WTC11 (cell line): ENCODE measurements at regions of chr2 and their contacts with region 1.

Region 1: DNA sequence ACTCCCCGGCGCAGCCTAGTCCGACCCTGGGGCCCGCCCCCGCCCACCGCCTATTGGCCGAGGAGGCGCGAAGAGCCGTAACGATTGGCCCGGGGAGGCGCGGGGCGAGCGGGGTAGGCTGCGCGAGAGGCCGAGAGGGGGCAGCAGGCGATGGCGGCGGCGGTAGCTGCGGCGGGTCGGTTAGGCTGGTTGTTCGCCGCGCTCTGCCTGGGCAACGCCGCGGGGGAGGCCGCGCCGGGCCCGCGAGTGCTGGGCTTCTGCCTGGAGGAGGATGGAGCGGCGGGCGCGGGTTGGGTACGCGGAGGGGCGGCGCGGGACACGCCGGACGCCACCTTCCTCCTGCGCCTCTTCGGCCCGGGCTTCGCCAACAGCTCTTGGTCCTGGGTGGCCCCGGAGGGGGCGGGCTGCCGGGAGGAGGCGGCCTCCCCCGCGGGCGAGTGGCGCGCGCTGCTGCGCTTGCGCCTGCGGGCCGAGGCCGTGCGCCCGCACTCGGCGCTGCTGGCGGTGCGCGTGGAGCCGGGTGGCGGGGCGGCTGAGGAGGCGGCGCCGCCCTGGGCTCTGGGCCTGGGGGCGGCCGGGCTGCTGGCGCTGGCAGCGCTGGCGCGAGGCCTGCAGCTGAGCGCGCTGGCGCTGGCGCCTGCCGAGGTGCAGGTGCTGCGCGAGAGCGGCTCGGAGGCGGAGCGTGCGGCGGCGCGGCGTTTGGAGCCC is at the start of gene CNNM3:
- DNase-seq: peak; percentile 99
- ATAC-seq: peak; percentile 94
- H3K4me3 Mint-ChIP-seq: peak within 1 kb of the TSS; percentile 83
- H3K27ac Mint-ChIP-seq: peak within 1 kb of the TSS; percentile 59
- H3K4me1 Mint-ChIP-seq: peaks cover 47% of the 10 kb centered on the region
- H3K27me3 Mint-ChIP-seq: 0 out of 2 replicates have a peak, but pooled peaks cover 2% of the 10 kb centered on the region
- CTCF ChIP-seq: peak; percentile 36; the same call in 1 of the 2 replicates
- total RNA-seq, gene CNNM3: 34.9 to 36.6 TPM (median 35.2 TPM) in 3 replicates

Region 2: GRCh38 chr2:96760036-96760985 is 56.0 kb before region 1 on chr2 and contains the start of gene CNNM4:
- CTCF ChIA-PET with region 1: interaction called, 22 read pairs
- POLR2A ChIA-PET with region 1: interaction called, 4 read pairs
- DNase-seq: peak; percentile 96
- ATAC-seq: peak; percentile 85
- H3K4me3 Mint-ChIP-seq: peak within 1 kb of the TSS; percentile 67
- H3K27ac Mint-ChIP-seq: peak within 1 kb of the TSS; percentile 91
- H3K4me1 Mint-ChIP-seq: peaks cover 51% of the 10 kb centered on the region
- H3K27me3 Mint-ChIP-seq: peaks cover 16% of the 10 kb centered on the region
- CTCF ChIP-seq: no peak
- total RNA-seq, gene CNNM4: 13.9 to 14.3 TPM (median 14.0 TPM) in 3 replicates

Region 3: DNA sequence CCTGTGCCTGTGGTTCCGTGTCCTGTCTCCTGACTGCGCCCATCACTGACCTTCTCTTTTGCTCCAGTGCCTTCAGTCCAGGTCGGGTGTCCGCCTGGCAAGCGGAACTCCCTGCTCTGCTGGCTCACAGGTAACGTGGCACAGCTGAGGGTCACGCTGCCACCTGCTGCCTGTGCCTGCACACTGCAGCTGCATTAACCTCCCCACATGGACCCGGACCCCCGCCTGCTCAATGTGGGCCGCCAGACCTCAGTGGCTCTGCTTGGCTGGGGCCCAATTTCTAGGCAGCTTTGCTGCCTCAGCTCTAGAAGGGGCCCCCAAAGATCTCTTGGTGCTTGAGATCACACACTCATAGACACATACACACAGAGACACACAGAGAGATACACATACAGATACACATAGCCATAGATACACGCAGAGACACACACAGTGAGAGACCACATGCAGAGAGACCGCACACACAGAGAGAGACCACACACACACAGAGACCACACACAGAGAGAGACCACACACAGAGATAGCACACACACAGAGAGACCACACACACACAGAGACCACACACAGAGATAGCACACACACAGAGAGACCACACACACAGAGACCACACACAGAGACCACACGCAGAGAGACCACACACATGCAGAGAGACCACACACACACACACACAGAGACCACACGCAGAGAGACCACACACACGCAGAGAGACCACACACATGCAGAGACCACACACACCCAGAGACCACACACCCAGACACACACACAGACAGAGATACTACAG is 15.1 kb before region 1 on chr2:
- CTCF ChIA-PET with region 1: interaction called, 14 read pairs
- POLR2A ChIA-PET with region 1: no interaction called
- DNase-seq: peak; percentile 84
- ATAC-seq: peak; percentile 96
- H3K4me3 Mint-ChIP-seq: no peak overlapping the region
- H3K27ac Mint-ChIP-seq: no peak overlapping the region
- H3K4me1 Mint-ChIP-seq: no peaks in the 10 kb centered on the region
- H3K27me3 Mint-ChIP-seq: no peaks in the 10 kb centered on the region
- CTCF ChIP-seq: peak; percentile 79

Region 4: DNA sequence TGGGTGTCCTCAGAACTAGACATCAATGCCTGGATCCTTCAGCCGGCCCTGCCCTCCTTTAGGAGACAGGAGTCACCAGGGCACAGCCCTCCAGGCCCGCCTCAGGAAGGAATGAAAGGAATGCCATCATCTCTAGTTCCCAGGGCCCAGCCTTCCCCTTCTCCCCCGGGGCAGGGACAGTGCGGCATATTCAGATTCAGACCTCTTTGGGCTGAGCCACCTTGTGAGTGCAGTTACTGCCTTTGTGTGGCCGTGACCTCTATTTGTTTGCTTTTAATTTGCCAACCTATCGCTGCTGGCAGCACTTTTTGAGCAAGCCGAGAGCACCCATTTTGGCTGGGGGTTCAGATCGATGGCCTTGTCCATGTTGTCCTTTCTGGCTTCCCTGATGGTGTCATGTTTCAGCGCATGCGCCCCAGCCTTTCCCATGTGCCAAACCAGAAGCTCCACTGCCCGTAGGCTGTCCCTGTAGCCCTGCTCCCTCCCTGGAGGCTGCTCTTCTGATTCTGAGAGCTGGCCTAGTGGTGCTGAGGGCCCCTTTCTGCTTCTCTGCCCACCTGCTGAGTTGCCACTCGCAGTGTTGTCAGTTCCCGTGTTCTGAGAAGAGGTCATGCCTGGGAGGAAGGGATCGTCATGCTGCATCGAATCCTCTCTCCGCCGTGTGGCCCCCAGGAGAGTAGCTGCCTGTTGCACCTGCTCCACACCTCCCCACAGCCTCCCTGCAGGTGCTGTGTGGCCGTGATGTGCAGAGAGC is 16.6 kb after region 1 on chr2:
- CTCF ChIA-PET with region 1: interaction called, 16 read pairs
- POLR2A ChIA-PET with region 1: interaction called, 4 read pairs
- DNase-seq: peak; percentile 77
- ATAC-seq: peak; percentile 94
- H3K4me3 Mint-ChIP-seq: peak overlapping the region; percentile 64
- H3K27ac Mint-ChIP-seq: peak overlapping the region; percentile 98
- H3K4me1 Mint-ChIP-seq: peaks cover 27% of the 10 kb centered on the region
- H3K27me3 Mint-ChIP-seq: no peaks in the 10 kb centered on the region
- CTCF ChIP-seq: no peak

Region 5: DNA sequence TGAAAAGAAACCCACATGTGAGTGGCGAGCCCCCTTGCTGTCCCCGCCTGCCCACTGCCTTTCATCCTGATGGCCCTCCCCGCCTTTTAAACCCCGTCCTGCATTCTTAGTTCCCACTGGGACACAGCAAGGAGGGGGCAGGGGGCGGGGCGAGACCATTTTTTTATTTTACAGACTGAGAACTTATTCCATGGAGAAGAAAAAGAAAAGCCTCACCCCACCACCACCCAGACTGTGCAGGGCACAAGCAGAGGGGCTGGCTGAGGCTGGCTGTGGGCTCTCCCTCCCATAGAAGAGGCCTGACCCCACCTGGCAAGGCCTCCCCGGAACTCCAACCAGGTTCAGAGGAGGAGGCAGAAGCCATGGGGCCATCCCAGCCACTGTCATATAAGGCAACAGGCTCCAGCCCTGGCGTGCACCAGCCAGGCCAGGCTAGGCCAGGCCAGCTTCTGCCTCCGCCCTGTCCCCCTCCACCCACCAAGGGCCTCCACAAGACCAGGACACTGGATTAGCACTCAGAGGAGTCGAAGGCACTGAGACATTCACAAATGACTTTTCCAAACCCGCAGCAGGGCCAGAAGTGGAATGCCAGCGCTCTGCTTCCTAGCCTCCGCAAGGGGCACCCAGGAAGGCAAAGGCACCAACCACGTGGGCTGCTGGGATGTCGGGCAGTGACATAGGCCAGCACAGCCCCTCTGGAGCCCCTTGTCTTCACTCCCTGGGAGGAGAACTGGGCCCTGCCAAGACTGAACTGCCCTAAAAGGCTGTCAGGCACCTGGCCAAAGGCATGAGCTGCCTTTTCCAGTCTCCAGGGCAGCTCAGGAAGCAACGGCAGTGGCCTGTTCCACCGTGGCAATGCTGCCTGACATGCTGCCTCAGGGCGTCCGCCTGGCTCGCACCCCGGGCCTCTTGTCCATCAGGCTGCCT is 91.1 kb after region 1 on chr2:
- CTCF ChIA-PET with region 1: no interaction called
- POLR2A ChIA-PET with region 1: no interaction called
- DNase-seq: peak; percentile 71
- ATAC-seq: peak; percentile 91
- H3K4me3 Mint-ChIP-seq: peak overlapping the region; percentile 8; the same call in 1 of the 2 replicates
- H3K27ac Mint-ChIP-seq: 0 out of 2 replicates have a peak overlapping the region, but pooled peaks have one; percentile 11
- H3K4me1 Mint-ChIP-seq: peaks cover 32% of the 10 kb centered on the region
- H3K27me3 Mint-ChIP-seq: peaks cover 14% of the 10 kb centered on the region
- CTCF ChIP-seq: no peak

Region 6: GRCh38 chr2:96927405-96928243 is 111.3 kb after region 1 on chr2:
- CTCF ChIA-PET with region 1: no interaction called
- POLR2A ChIA-PET with region 1: no interaction called
- DNase-seq: no peak
- ATAC-seq: peak; percentile 38; the same call in 1 of the 2 replicates
- H3K4me3 Mint-ChIP-seq: no peak overlapping the region
- H3K27ac Mint-ChIP-seq: no peak overlapping the region
- H3K4me1 Mint-ChIP-seq: peaks cover 23% of the 10 kb centered on the region
- H3K27me3 Mint-ChIP-seq: peaks cover 37% of the 10 kb centered on the region
- CTCF ChIP-seq: no peak

Region 7: DNA sequence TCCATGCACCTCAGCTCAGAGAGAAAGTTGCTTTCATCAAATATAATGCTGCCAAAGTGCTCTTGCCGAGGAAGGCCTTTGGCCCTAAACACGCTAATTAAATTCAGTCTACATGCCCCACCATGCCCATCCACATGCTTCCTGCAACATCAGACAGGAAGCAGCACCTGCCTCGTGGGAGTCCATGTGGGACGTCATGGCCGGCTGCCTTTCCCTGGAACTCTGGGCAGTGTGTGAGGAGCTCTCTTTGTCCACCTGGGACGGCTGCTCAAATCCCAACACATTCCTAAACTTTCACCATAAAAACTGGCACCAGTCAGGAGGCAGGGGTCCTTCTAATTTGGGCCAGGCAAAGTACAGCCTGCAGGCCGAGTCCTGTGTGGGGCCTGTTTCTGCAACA is 147.0 kb after region 1 on chr2:
- CTCF ChIA-PET with region 1: no interaction called
- POLR2A ChIA-PET with region 1: no interaction called
- DNase-seq: no peak
- ATAC-seq: no peak
- H3K4me3 Mint-ChIP-seq: no peak overlapping the region
- H3K27ac Mint-ChIP-seq: no peak overlapping the region
- H3K4me1 Mint-ChIP-seq: peaks cover 4% of the 10 kb centered on the region
- H3K27me3 Mint-ChIP-seq: no peaks in the 10 kb centered on the region
- CTCF ChIP-seq: no peak